Pancreas (tissue), 10 donors: ENCODE measurements at regions of chr1 and their contacts with region 1.

Region 1: DNA sequence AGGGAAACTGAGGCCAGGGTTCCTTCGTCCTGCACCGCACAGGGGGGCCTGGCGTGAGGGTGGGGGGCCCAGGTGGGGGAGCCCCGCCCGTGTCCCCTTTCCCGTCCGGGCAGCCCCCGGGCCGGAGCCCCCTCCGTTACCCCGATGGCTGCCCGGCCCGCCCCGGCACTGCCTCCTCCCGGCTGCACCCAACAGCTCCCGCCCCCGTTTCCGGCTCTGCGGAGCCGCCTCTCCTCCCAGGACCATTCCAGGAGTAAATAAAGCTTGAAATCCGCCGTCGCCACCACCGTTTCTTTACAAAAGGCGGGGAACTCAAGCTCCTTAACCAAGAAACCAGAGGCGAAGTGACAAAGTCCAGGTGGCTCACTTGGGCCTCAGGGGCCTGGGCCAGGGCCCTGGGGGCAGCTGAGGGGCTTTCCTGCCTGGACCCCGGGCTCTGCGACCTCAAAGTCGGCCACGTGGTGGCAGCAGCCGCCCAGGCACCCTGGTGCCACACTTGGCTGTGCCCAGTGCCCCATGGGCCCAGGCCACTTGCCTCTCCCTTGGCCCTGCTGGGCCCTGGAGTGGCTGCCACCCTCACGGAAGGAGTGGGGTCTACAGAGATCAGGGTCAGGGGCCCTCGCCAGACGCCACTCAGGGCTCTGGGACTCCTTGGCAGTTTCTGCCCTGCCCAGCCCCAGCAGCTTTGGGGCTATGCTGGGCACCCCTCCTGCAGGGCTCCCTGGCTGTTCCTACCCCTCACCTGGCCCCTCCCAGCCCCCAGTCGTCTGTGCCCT is 514 bp upstream of the FAAP20 start:
- DNase-seq: peak; percentile 85 to 95 (median 90)
- ATAC-seq: peak; percentile 70 to 79 (median 74)
- H3K4me3 ChIP-seq: peak overlapping the region; percentile 43 to 67 (median 52)
- H3K27ac ChIP-seq: peak overlapping the region; percentile 69 to 89 (median 77)
- H3K4me1 ChIP-seq: peaks cover 11 to 46% (median 13%) of the 10 kb centered on the region in 3 donors
- H3K27me3 ChIP-seq: no peaks in the 10 kb centered on the region
- CTCF ChIP-seq: peak; percentile 67 to 89 (median 86)

Region 2: GRCh38 chr1:2314803-2315673 is 120.0 kb after region 1 on chr1:
- intact Hi-C with region 1: loop called in 1 of 3 experiments (anchors 5 kb)
- DNase-seq: peak in 3 of 6 donors; percentile 35 to 82 (median 44)
- ATAC-seq: peak; percentile 50 to 65 (median 56)
- H3K4me3 ChIP-seq: peak overlapping the region; percentile 53 to 80 (median 74)
- H3K27ac ChIP-seq: peak overlapping the region; percentile 18 to 76 (median 61)
- H3K4me1 ChIP-seq: no peaks in the 10 kb centered on the region
- H3K27me3 ChIP-seq: no peaks in the 10 kb centered on the region
- CTCF ChIP-seq: peak; percentile 97

Region 3: DNA sequence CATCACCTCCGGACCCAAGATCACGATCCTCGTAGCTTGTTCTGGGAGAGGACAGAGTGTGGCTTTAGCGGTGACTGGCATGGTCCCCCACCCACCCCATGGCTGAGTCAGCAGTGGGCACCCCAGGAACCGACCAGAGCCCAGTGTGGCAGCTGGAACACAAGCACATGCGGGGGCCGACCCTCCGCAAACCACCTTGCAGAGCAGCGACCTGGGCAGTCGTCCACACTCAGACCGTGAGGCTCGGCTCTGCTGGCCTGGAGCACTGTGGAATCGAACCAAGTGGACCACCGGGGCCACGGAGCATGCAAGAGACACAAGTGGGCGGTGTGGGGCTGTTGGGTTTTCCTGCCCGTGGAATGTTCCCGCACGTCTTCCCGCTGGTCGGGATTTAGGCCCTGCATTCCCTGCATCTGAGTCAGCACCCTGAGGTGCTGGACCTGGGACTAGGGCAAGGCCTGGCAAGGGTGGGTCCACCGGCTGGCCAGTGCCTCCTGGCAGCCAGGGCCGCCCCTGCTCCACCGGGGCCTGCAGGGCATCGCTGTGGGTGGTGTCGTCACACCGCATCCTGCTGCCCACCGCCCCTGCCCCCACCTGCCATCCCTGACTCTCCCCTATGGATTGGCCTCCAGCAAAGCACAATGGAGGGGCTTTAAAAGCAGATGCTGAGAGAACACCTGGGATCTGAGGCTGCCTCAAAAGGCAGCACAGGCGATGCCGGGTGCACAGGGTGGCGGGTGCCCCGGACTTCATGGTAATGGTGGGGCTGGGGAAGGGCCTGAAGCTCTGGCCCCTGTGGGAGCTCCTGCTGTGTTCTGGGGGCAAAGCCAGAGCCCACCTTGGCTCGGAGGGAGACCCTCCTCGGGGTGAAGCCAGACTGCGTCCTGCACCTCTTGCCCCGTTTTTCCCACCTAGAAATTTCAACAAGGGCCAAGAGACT is 177.7 kb after region 1 on chr1:
- intact Hi-C with region 1: loop called in 1 of 3 experiments (anchors 10 kb)
- DNase-seq: peak in 3 of 6 donors; percentile 12 to 60 (median 56)
- ATAC-seq: no peak
- H3K4me3 ChIP-seq: no peak overlapping the region
- H3K27ac ChIP-seq: no peak overlapping the region
- H3K4me1 ChIP-seq: no peaks in the 10 kb centered on the region
- H3K27me3 ChIP-seq: no peaks in the 10 kb centered on the region
- CTCF ChIP-seq: no peak

Region 4: GRCh38 chr1:2381741-2382620 is 186.9 kb after region 1 on chr1:
- intact Hi-C with region 1: loop called (anchors 2 to 10 kb)
- DNase-seq: peak; percentile 70 to 95 (median 83)
- ATAC-seq: peak; percentile 89 to 98 (median 96)
- H3K4me3 ChIP-seq: no peak overlapping the region
- H3K27ac ChIP-seq: no peak overlapping the region
- H3K4me1 ChIP-seq: no peaks in the 10 kb centered on the region
- H3K27me3 ChIP-seq: no peaks in the 10 kb centered on the region
- CTCF ChIP-seq: peak; percentile 80 to 89 (median 85)

Region 5: GRCh38 chr1:2611031-2611501 is 416.0 kb after region 1 on chr1:
- intact Hi-C with region 1: loop called in 1 of 3 experiments (anchors 10 kb)
- DNase-seq: peak in 5 of 6 donors; percentile 19 to 75 (median 51)
- ATAC-seq: peak in 3 of 4 donors; percentile 51 to 65 (median 56)
- H3K4me3 ChIP-seq: no peak overlapping the region
- H3K27ac ChIP-seq: no peak overlapping the region
- H3K4me1 ChIP-seq: no peaks in the 10 kb centered on the region
- H3K27me3 ChIP-seq: no peaks in the 10 kb centered on the region
- CTCF ChIP-seq: no peak